ENCODE measurements at regions of chr6 and their contacts with region 1.

Region 1: GRCh38 chr6:87237804-87238203 is 82.4 kb downstream of the ZNF292 start:
- DNase-seq: no peak
- H3K4me3 Mint-ChIP-seq: no peak overlapping the region
- H3K27ac Mint-ChIP-seq: no peak overlapping the region
- H3K4me1 Mint-ChIP-seq: peaks cover 11% of the 10 kb centered on the region
- H3K27me3 Mint-ChIP-seq: no peaks in the 10 kb centered on the region

Region 2: GRCh38 chr6:87066449-87067333 is 171.1 kb before region 1 on chr6:
- intact Hi-C with region 1: loop called (anchors 1 kb)
- DNase-seq: no peak
- H3K4me3 Mint-ChIP-seq: no peak overlapping the region
- H3K27ac Mint-ChIP-seq: no peak overlapping the region
- H3K4me1 Mint-ChIP-seq: no peaks in the 10 kb centered on the region
- H3K27me3 Mint-ChIP-seq: peaks cover 10% of the 10 kb centered on the region

Region 3: GRCh38 chr6:87139236-87139635 is 98.6 kb before region 1 on chr6:
- intact Hi-C with region 1: loop called (anchors 1 kb)
- DNase-seq: peak; percentile 14
- H3K4me3 Mint-ChIP-seq: no peak overlapping the region
- H3K27ac Mint-ChIP-seq: no peak overlapping the region
- H3K4me1 Mint-ChIP-seq: peaks cover 6% of the 10 kb centered on the region
- H3K27me3 Mint-ChIP-seq: peaks cover 49% of the 10 kb centered on the region

Region 4: GRCh38 chr6:87220997-87221396 is 16.8 kb before region 1 on chr6:
- intact Hi-C with region 1: loop called (anchors 2 kb)
- DNase-seq: no peak
- H3K4me3 Mint-ChIP-seq: no peak overlapping the region
- H3K27ac Mint-ChIP-seq: no peak overlapping the region
- H3K4me1 Mint-ChIP-seq: no peaks in the 10 kb centered on the region
- H3K27me3 Mint-ChIP-seq: no peaks in the 10 kb centered on the region

Region 5: DNA sequence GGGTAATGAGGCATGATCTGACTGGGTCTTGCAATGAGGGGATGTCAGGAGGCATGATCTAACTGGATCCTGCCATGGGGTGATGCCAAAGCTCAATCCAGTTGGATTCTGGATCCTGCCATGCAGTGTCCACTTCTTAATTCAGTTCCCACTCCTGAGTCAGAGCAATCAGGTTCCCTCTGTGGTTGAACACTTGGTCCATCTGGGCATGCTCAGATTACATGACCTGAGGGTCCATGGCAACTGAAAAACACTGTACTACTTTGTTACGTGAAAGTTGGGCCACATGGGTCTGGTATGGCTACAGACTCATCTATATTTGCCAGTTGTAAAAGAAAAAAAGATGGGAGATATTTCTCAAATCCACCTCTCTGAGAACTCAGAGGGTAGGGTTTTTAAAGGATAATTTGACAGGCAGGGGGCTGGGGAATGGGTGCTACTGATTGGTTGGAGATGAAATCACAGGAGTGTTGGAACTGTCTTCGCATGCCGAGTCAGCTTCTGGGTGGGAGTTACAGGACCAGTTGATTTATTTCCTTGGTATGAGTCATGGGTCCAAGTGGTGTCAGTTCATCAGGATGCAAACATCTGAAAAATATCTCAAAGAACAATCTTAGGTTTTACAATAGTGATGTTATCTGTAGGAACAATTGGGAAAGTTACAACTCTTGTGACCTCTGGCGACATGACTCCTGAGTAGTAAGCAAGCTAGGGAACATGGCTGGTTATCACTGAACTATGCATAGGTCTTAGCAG is 128.4 kb after region 1 on chr6:
- intact Hi-C with region 1: no loop called
- DNase-seq: no peak
- H3K4me3 Mint-ChIP-seq: no peak overlapping the region
- H3K27ac Mint-ChIP-seq: no peak overlapping the region
- H3K4me1 Mint-ChIP-seq: no peaks in the 10 kb centered on the region
- H3K27me3 Mint-ChIP-seq: no peaks in the 10 kb centered on the region